Adrenal gland (tissue), 19 donors: ENCODE measurements at regions of chr5 and their contacts with region 1.

Region 1: GRCh38 chr5:115309751-115310370 is 13.4 kb upstream of the CCDC112 start:
- DNase-seq: no peak
- H3K4me3 ChIP-seq: no peak overlapping the region
- H3K27ac ChIP-seq: no peak overlapping the region
- H3K4me1 ChIP-seq: no peaks in the 10 kb centered on the region
- H3K27me3 ChIP-seq: no peaks in the 10 kb centered on the region
- CTCF ChIP-seq: peak; percentile 49 to 89 (median 78)
- POLR2A ChIP-seq: no peak

Region 2: GRCh38 chr5:114898602-114899001 is 411.3 kb before region 1 on chr5:
- intact Hi-C with region 1: no loop called
- DNase-seq: no peak
- H3K4me3 ChIP-seq: no peak overlapping the region
- H3K27ac ChIP-seq: no peak overlapping the region
- H3K4me1 ChIP-seq: no peaks in the 10 kb centered on the region
- H3K27me3 ChIP-seq: no peaks in the 10 kb centered on the region
- CTCF ChIP-seq: peak in 3 of 6 experiments; percentile 18 to 29 (median 25)
- POLR2A ChIP-seq: no peak

Region 3: DNA sequence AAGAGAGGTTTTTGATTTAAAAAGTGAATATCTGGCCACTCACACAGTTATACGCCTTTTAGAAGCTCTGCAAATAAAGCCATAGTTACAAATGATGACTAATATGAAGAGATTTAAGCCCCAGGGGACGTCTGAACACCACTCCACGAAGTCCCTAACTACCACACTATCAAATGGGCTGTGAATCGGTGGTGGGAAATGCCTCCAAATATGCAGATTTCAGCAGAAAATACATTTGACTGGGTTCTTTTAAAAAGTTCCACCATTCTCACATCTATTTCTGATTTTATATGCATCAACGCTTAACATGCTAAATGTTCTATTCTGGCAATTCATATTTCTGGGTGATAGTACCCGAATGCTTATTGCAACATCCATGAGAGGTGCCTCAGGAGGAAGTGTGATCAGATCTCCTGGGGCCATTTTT is 269.9 kb after region 1 on chr5:
- intact Hi-C with region 1: loop called (anchors 2 to 5 kb)
- DNase-seq: no peak
- H3K4me3 ChIP-seq: no peak overlapping the region
- H3K27ac ChIP-seq: no peak overlapping the region
- H3K4me1 ChIP-seq: no peaks in the 10 kb centered on the region
- H3K27me3 ChIP-seq: no peaks in the 10 kb centered on the region
- CTCF ChIP-seq: no peak
- POLR2A ChIP-seq: no peak

Region 4: DNA sequence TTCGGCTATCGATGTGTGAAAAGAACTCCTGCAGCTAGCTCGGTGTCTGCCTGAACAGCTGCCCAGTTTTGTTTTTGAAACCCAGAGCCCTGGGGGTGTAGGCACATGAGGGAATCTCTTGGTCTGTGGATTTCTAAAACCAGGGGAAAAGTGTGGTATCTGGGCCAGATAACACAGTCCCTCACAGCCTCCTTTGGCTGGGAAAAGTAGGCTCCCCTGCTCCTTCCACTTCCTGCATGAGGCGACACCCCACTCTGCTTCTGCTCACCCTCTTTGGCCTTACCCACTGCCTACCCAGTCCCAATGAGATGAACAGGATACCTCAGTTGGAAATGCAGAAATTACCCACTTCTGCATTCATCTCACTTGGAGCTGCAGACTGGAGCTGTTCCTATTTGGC is 516.1 kb after region 1 on chr5:
- intact Hi-C with region 1: loop called in 1 of 2 experiments (anchors 10 kb)
- DNase-seq: no peak
- H3K4me3 ChIP-seq: no peak overlapping the region
- H3K27ac ChIP-seq: no peak overlapping the region
- H3K4me1 ChIP-seq: no peaks in the 10 kb centered on the region
- H3K27me3 ChIP-seq: no peaks in the 10 kb centered on the region
- CTCF ChIP-seq: no peak
- POLR2A ChIP-seq: no peak